ENCODE measurements at regions of chr19 and their contacts with region 1.

Region 1: DNA sequence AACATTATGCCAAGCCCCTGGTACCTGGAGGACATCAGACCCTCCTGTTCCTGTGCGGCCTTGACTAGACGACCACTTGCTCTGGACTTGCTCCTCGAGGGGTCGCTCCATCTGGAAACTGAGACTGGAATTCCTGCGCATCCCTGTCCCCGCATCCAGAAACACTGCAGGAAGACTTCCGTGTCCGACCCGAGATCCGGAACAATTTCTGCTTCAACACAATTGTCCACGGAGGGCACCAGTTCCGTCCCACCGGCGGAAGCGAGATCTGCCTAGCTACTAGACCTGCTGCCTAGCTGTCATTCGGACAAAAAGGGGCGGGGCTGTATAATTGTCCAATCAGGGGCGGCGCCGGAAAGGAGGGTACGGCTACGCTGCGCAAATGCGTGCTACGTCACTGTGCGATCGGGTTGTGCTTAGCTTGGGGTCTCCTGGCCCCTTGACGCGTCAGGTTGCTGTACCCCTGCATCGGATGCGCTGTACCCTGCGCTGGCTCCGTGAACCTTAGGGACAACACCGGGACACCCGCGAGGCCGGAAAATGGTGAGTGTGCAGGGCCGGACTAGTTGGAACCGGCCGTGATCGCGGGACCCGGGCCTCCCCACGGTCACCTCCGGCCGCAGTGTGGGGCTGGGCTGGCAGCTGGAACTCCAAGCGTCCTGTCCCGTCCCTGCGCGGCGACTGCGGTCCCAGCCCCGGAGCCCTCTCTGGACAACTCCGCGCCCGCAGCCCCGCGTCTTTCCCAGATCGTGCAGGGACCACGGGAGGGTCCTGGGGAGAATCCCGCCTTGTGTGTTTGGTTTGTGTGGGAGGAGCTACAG is at the starts of genes ZNF490 and ZNF791:
- DNase-seq: peak; percentile 99
- H3K4me3 Mint-ChIP-seq: peak within 1 kb of the TSS; percentile 100
- H3K27ac Mint-ChIP-seq: peak within 1 kb of the TSS; percentile 95
- H3K4me1 Mint-ChIP-seq: peaks cover 43% of the 10 kb centered on the region
- H3K27me3 Mint-ChIP-seq: no peaks in the 10 kb centered on the region
- total RNA-seq, gene ZNF490: 3.9 to 5.0 TPM
- total RNA-seq, gene ZNF791: 11.2 to 11.9 TPM

Region 2: DNA sequence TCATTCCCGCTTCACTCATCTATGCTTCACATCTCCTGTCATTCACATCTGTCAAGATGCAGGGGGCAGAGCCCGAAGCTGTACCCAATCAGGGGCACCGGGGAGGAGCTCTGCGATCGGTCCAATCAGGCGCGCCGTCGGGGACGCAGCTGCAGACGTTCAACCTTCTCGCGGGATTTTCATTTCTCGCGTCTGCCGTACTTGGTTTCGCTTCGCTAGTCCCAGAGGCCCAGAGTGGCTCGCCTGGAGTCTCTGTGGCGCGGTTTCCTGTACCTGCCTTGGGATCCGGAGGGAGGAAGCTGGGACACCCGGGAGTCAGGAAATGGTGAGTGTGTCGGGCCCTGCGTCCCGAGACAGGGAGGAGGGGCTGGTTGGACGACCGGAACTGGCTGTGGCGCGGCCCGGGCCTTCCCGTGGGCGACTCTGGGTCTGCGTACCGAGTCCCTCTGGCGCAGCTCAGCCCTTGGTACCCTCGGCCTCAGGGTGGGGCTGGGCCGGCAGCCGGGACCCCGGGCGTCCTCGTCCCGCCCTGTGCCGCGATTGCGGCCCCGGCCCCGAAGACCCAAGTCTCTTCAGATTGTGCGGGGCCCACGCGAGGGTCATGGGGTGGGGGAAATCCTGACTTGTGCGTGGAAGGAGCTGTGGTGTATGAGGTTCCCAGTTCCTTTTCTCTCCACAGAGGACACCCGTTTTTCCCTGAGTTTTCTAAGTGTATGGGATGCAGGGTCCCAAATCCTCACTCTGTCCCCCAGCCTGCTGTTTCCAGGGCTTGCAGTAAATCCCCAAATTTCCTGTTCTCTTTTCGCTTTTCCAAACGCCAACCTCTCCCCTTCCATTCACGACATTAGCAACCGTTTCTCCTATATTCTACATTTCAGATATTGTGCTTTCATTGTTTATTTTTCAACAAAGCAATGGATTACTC is 447.6 kb before region 1 on chr19 and contains the start of gene ZNF136:
- CTCF ChIA-PET with region 1: no interaction called
- intact Hi-C with region 1: loop called (anchors 2 kb)
- DNase-seq: peak; percentile 99
- H3K4me3 Mint-ChIP-seq: peak within 1 kb of the TSS; percentile 90
- H3K27ac Mint-ChIP-seq: peak within 1 kb of the TSS; percentile 91
- H3K4me1 Mint-ChIP-seq: peaks cover 42% of the 10 kb centered on the region
- H3K27me3 Mint-ChIP-seq: no peaks in the 10 kb centered on the region
- total RNA-seq, gene ZNF136: 8.4 to 11.6 TPM

Measured in activated naive CD4-positive, alpha-beta T cell treated with anti-CD3 and anti-CD28 coated beads for 36 hours (primary cell).